ENCODE measurements at regions of chr22 and their contacts with region 1.

Region 1: DNA sequence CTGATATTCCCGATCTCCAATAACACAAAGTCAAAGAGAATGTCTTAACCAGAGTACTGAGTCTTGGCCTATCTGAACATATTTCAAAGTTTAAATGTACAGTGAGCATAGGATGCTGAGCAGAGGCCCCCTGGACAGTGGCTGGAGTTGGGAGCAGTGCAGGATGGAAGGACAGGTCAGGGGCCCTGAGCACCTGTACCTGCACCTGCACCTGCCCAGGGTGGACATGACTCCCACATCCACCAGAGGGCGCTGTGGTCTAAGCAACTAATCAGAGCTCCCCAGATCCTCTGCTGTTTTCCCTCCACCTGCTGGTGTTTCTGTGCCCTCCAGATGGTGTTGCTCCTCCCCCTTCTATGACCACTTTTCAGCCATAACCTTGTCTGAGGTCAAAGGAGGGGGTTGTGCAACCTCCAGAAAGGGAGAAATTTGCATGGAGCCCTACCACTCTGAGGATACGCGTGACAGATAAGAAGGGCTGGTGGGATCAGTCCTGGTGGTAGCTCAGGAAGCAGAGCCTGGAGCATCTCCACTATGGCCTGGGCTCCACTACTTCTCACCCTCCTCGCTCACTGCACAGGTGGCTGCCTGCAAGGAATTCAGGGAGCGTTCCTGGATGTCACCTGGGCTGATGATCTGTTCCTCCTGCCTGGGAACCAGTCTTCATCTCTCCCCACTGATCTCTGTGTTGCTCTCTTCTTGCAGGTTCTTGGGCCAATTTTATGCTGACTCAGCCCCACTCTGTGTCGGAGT is 49.1 kb upstream of the VPREB1 start:
- DNase-seq: peak; percentile 92
- H3K4me3 Mint-ChIP-seq: no peak overlapping the region
- H3K27ac Mint-ChIP-seq: no peak overlapping the region
- H3K4me1 Mint-ChIP-seq: no peaks in the 10 kb centered on the region
- H3K27me3 Mint-ChIP-seq: peaks cover 87% of the 10 kb centered on the region
- CTCF ChIP-seq: peak; percentile 94

Region 2: GRCh38 chr22:22076932-22077703 is 118.3 kb before region 1 on chr22:
- CTCF ChIA-PET with region 1: no interaction called
- intact Hi-C with region 1: no loop called
- DNase-seq: no peak
- H3K4me3 Mint-ChIP-seq: no peak overlapping the region
- H3K27ac Mint-ChIP-seq: no peak overlapping the region
- H3K4me1 Mint-ChIP-seq: peaks cover 16% of the 10 kb centered on the region
- H3K27me3 Mint-ChIP-seq: peaks cover 25% of the 10 kb centered on the region
- CTCF ChIP-seq: no peak

Region 3: DNA sequence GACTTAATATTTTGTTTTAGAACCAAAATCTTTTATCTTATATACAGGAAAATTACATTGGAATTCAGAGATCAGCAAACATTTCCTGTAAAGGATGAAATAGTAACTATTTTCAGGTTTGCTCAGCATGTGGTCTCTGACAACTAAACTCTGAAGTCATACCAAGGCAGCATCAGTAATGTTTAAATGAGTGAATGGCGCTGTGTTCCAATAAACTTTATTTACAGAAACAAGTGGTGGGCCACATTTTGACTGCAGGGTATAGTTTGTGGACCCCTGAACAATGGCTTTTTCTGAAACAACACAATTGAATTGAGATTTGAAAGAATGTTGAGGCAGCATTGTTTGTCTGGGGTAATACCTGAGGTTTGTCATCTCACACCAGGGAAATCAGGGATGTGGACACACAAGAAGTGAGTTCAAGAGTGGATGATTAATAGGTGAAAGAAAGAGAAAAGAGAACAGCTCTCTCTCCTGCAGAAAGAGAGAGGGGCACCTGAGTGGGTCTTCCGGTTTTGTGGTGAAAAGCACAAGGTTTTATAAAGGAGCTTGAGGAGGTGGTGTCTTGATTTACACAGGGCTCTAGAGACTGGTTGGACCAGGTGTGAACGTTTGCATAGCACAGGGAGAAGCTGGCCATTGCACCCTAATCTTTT is 64.4 kb before region 1 on chr22:
- CTCF ChIA-PET with region 1: no interaction called
- intact Hi-C with region 1: no loop called
- DNase-seq: no peak
- H3K4me3 Mint-ChIP-seq: no peak overlapping the region
- H3K27ac Mint-ChIP-seq: no peak overlapping the region
- H3K4me1 Mint-ChIP-seq: no peaks in the 10 kb centered on the region
- H3K27me3 Mint-ChIP-seq: peaks cover 63% of the 10 kb centered on the region
- CTCF ChIP-seq: no peak

Region 4: DNA sequence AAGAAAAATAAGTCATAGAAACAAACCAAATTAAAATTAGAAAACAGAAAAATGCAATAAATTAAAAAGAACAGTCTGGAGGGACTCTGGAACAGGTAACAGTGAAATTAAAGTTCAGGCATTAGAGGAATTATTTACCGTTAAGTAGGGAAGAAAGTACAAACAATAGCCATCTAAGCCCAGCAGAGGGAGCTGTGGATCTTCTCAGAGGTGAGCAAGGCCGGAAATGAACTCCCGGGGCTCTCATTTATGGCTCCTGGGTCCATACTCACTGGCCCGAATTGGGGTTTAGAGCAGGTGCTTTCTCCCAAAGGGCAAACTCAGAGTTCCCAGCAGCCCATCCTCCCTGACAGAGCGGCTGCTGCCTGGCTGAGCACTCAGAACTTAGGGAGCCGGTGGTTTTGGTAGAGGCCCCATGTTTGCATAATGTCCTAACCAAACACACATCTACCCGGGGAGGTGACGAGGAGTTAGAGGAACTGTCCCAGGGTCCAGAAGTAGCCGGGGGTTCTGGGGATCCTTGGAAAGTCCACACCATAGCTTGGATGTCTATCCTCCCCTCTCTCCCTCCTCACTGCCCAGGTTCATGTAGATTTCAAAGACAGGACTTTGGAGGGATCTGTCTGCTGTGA is 38.6 kb before region 1 on chr22:
- CTCF ChIA-PET with region 1: interaction called, 3 read pairs
- intact Hi-C with region 1: loop called (anchors 5 kb)
- DNase-seq: peak; percentile 65
- H3K4me3 Mint-ChIP-seq: no peak overlapping the region
- H3K27ac Mint-ChIP-seq: no peak overlapping the region
- H3K4me1 Mint-ChIP-seq: no peaks in the 10 kb centered on the region
- H3K27me3 Mint-ChIP-seq: peaks cover 68% of the 10 kb centered on the region
- CTCF ChIP-seq: peak; percentile 67

Region 5: GRCh38 chr22:22207845-22208564 is 12.6 kb after region 1 on chr22:
- CTCF ChIA-PET with region 1: interaction called, 10 read pairs
- intact Hi-C with region 1: no loop called
- DNase-seq: peak; percentile 88
- H3K4me3 Mint-ChIP-seq: no peak overlapping the region
- H3K27ac Mint-ChIP-seq: no peak overlapping the region
- H3K4me1 Mint-ChIP-seq: peaks cover 28% of the 10 kb centered on the region
- H3K27me3 Mint-ChIP-seq: peaks cover 7% of the 10 kb centered on the region
- CTCF ChIP-seq: peak; percentile 70

Region 6: GRCh38 chr22:22226448-22227187 is 31.2 kb after region 1 on chr22:
- CTCF ChIA-PET with region 1: no interaction called
- intact Hi-C with region 1: no loop called
- DNase-seq: no peak
- H3K4me3 Mint-ChIP-seq: no peak overlapping the region
- H3K27ac Mint-ChIP-seq: no peak overlapping the region
- H3K4me1 Mint-ChIP-seq: no peaks in the 10 kb centered on the region
- H3K27me3 Mint-ChIP-seq: peaks cover 21% of the 10 kb centered on the region
- CTCF ChIP-seq: no peak

Measured in Calu3 (cell line).